Posterior vena cava (tissue), 2 donors: ENCODE measurements at regions of chrX and their contacts with region 1.

Region 1: DNA sequence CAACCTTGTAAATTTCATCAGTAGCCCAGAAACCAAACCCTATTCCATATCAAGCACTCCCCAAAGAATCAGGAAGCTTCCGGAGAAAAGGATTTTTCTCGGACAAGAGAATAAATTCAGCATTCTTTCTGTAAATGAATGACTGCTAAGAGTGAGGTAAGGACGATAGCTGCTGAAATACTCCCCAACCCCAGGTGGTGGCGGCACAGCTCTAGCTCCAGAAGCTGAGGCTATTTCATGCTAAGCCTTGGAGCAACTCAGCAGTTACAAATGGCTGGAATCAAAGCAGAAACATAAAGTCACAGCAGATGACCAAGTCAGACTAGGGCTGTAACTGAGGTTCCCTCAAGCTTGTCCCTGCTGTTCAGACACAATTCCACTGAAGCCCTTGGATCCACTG is 13.9 kb upstream of the PCDH19 start:
- DNase-seq: no peak

Region 2: GRCh38 chrX:98448524-98448923 is 1975.5 kb before region 1 on chrX:
- intact Hi-C with region 1: loop called in 1 of 2 experiments (anchors 10 kb)
- DNase-seq: no peak

Region 3: DNA sequence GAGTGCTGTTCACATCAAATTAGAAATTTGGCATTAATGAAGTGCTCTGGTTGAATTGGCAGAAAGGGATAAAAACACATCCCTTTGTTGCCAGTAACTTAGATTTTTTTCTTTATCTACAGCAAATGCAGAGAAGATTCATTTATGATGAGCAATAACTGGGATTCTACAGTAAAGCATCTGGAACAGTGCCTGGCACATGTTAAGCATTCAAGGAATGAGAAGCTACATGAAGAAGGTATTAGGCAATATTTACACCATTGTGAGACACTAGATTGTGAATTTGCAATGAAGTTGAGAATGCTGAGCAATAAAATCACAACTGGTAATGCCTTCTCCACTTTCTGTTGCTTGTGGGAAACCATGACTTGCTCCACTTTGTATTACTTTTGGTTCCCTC is 47.4 kb before region 1 on chrX:
- intact Hi-C with region 1: no loop called
- DNase-seq: no peak

Region 4: GRCh38 chrX:100768679-100769338 is 344.8 kb after region 1 on chrX:
- intact Hi-C with region 1: no loop called
- DNase-seq: peak; percentile 93